ENCODE measurements at regions of chr6 and their contacts with region 1.

Region 1: DNA sequence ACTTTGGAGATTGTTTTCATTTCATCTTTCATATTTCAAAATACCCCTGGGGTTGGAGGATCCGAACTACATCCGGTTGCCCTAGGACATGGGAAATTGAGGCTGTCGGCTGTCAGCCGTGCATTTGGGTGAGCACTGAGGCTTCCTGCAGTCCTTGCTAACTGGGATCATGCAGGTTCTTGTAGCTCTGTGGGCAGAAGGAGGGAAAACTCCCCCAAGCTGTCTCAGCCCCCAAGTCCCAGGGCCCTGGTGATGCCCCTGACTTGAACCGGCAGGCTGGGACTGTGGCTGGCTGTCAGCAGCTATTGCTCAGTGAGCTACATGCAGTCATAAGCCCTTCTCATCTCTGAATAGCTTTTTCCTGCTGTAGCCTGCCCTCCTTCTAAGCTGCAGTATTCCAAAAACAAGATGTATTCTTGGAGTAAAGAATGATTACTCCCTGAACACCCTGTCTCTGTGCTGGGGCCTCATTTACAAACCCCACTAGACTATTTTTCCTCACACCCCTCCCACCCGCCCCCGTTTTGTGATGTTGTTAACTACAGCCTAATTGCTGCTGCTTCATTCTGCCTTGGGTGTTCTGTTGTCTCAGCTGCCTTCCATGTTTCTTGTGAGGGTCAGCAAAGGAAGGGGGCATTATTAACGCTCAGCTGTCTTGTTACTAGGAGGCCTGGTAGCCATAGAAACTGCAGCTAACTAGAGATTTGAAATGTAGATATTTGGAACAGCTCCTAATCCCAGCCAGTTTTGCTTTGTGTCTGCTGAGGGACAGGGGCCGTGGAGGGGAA is 18.0 kb downstream of the MTRES1 start:
- DNase-seq: peak in 1 of 2 experiments; percentile 3
- H3K4me3 ChIP-seq: no peak overlapping the region
- H3K27ac ChIP-seq: no peak overlapping the region
- H3K4me1 ChIP-seq: no peaks in the 10 kb centered on the region
- H3K27me3 ChIP-seq: no peaks in the 10 kb centered on the region
- CTCF ChIP-seq: no peak

Region 2: GRCh38 chr6:106475284-106475683 is 570.7 kb before region 1 on chr6:
- CTCF ChIA-PET with region 1: interaction called, 18 read pairs
- POLR2A ChIA-PET with region 1: no interaction called
- intact Hi-C with region 1: no loop called
- DNase-seq: no peak
- H3K4me3 ChIP-seq: no peak overlapping the region
- H3K27ac ChIP-seq: peak overlapping the region; percentile 82
- H3K4me1 ChIP-seq: peaks cover 51% of the 10 kb centered on the region
- H3K27me3 ChIP-seq: no peaks in the 10 kb centered on the region
- CTCF ChIP-seq: no peak